ENCODE measurements at regions of chr5 and their contacts with region 1.

Region 1: GRCh38 chr5:80191991-80192398 is 63.9 kb downstream of the SERINC5 start:
- DNase-seq: no peak
- H3K4me3 ChIP-seq: no peak overlapping the region
- H3K4me3 Mint-ChIP-seq: peak overlapping the region in 1 of 2 donors; percentile 28
- H3K27ac ChIP-seq: no peak overlapping the region
- H3K27ac Mint-ChIP-seq: no peak overlapping the region
- H3K4me1 ChIP-seq: peaks cover 22 to 25% of the 10 kb centered on the region in 2 donors
- H3K4me1 Mint-ChIP-seq: peaks cover 38% of the 10 kb centered on the region
- H3K27me3 ChIP-seq: no peaks in the 10 kb centered on the region
- H3K27me3 Mint-ChIP-seq: peaks cover 0 to 2% (median 0%) of the 10 kb centered on the region in 3 donors
- CTCF ChIP-seq: no peak

Region 2: DNA sequence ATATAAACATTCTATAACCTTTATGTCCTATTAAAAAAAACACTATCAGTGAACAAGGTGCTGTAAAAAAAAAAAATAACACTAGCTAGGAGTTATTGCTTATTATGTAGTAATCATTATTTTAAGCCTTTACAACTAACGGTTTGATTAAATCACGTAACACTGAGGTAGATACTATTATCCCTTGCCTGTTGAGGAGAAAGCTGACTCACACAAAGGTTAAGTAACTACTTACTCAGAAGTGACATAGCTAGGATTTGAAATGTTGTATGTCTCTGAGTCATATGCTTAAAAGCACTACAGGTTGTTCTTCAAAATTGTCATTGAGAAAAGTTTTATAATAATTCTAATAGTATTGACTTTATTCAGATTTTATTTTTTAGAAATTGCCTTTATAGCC is 571.0 kb before region 1 on chr5:
- intact Hi-C with region 1: no loop called
- DNase-seq: peak; percentile 32 to 69 (median 43)
- H3K4me3 ChIP-seq: no peak overlapping the region
- H3K4me3 Mint-ChIP-seq: no peak overlapping the region
- H3K27ac ChIP-seq: peak overlapping the region in 1 of 2 donors; percentile 59
- H3K27ac Mint-ChIP-seq: peak overlapping the region in 4 of 7 donors; percentile 26 to 86 (median 34)
- H3K4me1 ChIP-seq: peaks cover 8 to 20% of the 10 kb centered on the region in 2 donors
- H3K4me1 Mint-ChIP-seq: peaks cover 31% of the 10 kb centered on the region
- H3K27me3 ChIP-seq: no peaks in the 10 kb centered on the region
- H3K27me3 Mint-ChIP-seq: no peaks in the 10 kb centered on the region
- CTCF ChIP-seq: no peak

Region 3: DNA sequence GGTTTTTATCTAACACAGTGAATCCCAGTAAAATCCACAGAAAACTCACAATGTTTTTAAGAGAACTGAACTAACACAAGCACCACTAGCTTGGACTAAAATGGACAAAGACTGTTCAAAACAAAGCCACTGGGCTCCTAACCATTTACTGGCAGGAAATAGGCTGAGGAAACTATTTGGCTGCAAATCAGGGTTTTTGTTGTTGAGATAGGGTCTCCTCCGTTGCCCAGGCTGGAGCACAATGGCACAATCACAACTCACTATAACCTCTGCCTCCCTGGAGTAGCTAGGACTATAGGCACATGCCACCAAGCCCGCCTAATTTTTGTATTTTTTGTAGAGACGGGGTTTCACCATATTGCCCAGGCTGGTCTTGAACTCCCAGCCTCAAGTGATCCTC is 57.1 kb before region 1 on chr5:
- intact Hi-C with region 1: loop called in 1 of 2 experiments (anchors 5 kb)
- DNase-seq: no peak
- H3K4me3 ChIP-seq: peak overlapping the region in 1 of 3 experiments; percentile 53
- H3K4me3 Mint-ChIP-seq: no peak overlapping the region
- H3K27ac ChIP-seq: peak overlapping the region; percentile 86 to 92
- H3K27ac Mint-ChIP-seq: peak overlapping the region; percentile 95 to 98 (median 97)
- H3K4me1 ChIP-seq: peaks cover 65 to 74% of the 10 kb centered on the region in 2 donors
- H3K4me1 Mint-ChIP-seq: peaks cover 68% of the 10 kb centered on the region
- H3K27me3 ChIP-seq: no peaks in the 10 kb centered on the region
- H3K27me3 Mint-ChIP-seq: no peaks in the 10 kb centered on the region
- CTCF ChIP-seq: no peak

Region 4: DNA sequence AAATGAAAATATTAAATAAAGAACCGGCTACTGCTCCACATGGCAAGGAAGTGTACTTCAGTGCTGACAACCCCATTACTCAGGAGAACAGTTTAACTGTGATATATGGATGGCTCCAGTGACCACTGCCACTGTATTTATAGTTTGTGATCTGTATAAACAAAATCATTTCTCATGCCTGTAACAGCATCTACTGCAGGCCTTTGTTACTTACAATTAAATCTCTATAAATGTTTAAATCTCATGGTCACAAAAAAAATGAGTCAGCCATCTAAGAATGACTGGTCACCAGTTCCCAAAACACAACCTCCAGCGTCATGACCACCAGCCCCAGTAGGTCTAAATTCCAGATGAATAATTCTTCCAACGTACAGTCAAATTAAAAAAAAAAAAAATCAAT is 39.2 kb after region 1 on chr5:
- intact Hi-C with region 1: no loop called
- DNase-seq: no peak
- H3K4me3 ChIP-seq: no peak overlapping the region
- H3K4me3 Mint-ChIP-seq: no peak overlapping the region
- H3K27ac ChIP-seq: no peak overlapping the region
- H3K27ac Mint-ChIP-seq: no peak overlapping the region
- H3K4me1 ChIP-seq: no peaks in the 10 kb centered on the region
- H3K4me1 Mint-ChIP-seq: peaks cover 17% of the 10 kb centered on the region
- H3K27me3 ChIP-seq: no peaks in the 10 kb centered on the region
- H3K27me3 Mint-ChIP-seq: no peaks in the 10 kb centered on the region
- CTCF ChIP-seq: no peak

Region 5: GRCh38 chr5:80284720-80285119 is 92.7 kb after region 1 on chr5:
- intact Hi-C with region 1: no loop called
- DNase-seq: no peak
- H3K4me3 ChIP-seq: no peak overlapping the region
- H3K4me3 Mint-ChIP-seq: no peak overlapping the region
- H3K27ac ChIP-seq: no peak overlapping the region
- H3K27ac Mint-ChIP-seq: peak overlapping the region in 1 of 7 donors; percentile 40
- H3K4me1 ChIP-seq: no peaks in the 10 kb centered on the region
- H3K4me1 Mint-ChIP-seq: peaks cover 6% of the 10 kb centered on the region
- H3K27me3 ChIP-seq: no peaks in the 10 kb centered on the region
- H3K27me3 Mint-ChIP-seq: peaks cover 2 to 3% (median 2%) of the 10 kb centered on the region in 3 donors
- CTCF ChIP-seq: no peak